Posterior vena cava (tissue), 2 donors: ENCODE measurements at regions of chr1 and their contacts with region 1.

Region 1: GRCh38 chr1:15698201-15698600 is 14.1 kb downstream of the PLEKHM2 start:
- DNase-seq: no peak

Region 2: GRCh38 chr1:15657021-15657420 is 41.2 kb before region 1 on chr1:
- intact Hi-C with region 1: loop called in 1 of 2 experiments (anchors 1 kb)
- DNase-seq: no peak

Region 3: DNA sequence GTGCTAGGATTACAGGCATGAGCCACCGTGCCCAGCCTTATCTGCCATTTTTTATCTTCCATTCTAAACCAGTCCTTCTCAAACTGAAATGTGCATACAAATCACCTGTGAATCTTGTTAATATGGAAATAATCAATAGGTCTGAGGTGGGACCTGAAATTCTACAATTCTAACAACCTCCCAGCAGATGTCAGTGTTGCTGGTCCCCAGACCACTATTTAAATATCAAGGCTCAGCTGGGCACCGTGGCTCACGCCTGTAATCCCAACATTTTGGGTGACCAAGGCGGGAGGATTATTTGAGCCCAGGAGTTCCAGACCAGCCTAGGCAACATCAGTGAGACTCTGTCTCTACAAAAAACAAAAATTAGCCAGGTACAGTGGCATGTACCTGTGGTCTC is 105.2 kb after region 1 on chr1:
- intact Hi-C with region 1: no loop called
- DNase-seq: no peak